ENCODE measurements at regions of chr21 and their contacts with region 1.

Region 1: GRCh38 chr21:35026617-35027562 is 22.2 kb downstream of the RUNX1 start:
- DNase-seq: peak; percentile 82 to 96 (median 88)
- ATAC-seq: peak; percentile 82
- H3K4me3 ChIP-seq: peak overlapping the region; percentile 44
- H3K4me3 Mint-ChIP-seq: peak overlapping the region; percentile 82
- H3K27ac ChIP-seq: peak overlapping the region; percentile 52 to 89
- H3K27ac Mint-ChIP-seq: peak overlapping the region; percentile 97
- H3K4me1 ChIP-seq: peaks cover 85% of the 10 kb centered on the region
- H3K4me1 Mint-ChIP-seq: peaks cover 95% of the 10 kb centered on the region
- H3K27me3 ChIP-seq: no peaks in the 10 kb centered on the region
- H3K27me3 Mint-ChIP-seq: no peaks in the 10 kb centered on the region
- CTCF ChIP-seq: no peak

Region 2: DNA sequence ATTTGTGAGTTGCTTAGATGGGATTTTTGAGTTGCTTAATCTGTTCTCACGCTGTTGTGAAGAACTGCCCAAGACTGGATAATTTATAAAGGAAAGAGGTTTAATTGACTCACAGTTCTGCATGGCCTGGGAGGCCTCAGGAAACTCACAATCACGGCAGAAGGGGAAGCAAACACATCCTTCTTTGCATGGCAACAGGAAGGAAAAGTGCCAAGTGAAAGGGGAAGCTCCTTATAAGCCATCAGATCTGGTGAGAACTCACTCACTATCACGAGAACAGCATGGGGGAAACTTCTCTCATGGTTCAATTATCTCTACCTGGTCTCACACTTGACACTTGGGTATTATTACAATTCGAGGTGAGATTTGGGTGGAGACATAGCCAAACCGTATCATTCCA is 347.8 kb before region 1 on chr21:
- CTCF ChIA-PET with region 1: no interaction called
- POLR2A ChIA-PET with region 1: no interaction called
- intact Hi-C with region 1: no loop called
- DNase-seq: peak in 2 of 14 experiments; percentile 7 to 32
- ATAC-seq: no peak
- H3K4me3 ChIP-seq: no peak overlapping the region
- H3K4me3 Mint-ChIP-seq: no peak overlapping the region
- H3K27ac ChIP-seq: no peak overlapping the region
- H3K27ac Mint-ChIP-seq: no peak overlapping the region
- H3K4me1 ChIP-seq: no peaks in the 10 kb centered on the region
- H3K4me1 Mint-ChIP-seq: no peaks in the 10 kb centered on the region
- H3K27me3 ChIP-seq: peaks cover 5 to 10% of the 10 kb centered on the region in 2 experiments
- H3K27me3 Mint-ChIP-seq: peaks cover 42% of the 10 kb centered on the region
- CTCF ChIP-seq: no peak

Region 3: GRCh38 chr21:34933609-34934335 is 93.1 kb before region 1 on chr21:
- CTCF ChIA-PET with region 1: interaction called, 6 read pairs
- POLR2A ChIA-PET with region 1: interaction called, 10 read pairs
- intact Hi-C with region 1: loop called in 1 of 2 experiments (anchors 5 kb)
- DNase-seq: peak in 7 of 14 experiments; percentile 10 to 89 (median 35)
- ATAC-seq: peak; percentile 86
- H3K4me3 ChIP-seq: peak overlapping the region; percentile 39
- H3K4me3 Mint-ChIP-seq: peak overlapping the region; percentile 86
- H3K27ac ChIP-seq: peak overlapping the region; percentile 75 to 84
- H3K27ac Mint-ChIP-seq: peak overlapping the region; percentile 99
- H3K4me1 ChIP-seq: peaks cover 47% of the 10 kb centered on the region
- H3K4me1 Mint-ChIP-seq: peaks cover 92% of the 10 kb centered on the region
- H3K27me3 ChIP-seq: no peaks in the 10 kb centered on the region
- H3K27me3 Mint-ChIP-seq: no peaks in the 10 kb centered on the region
- CTCF ChIP-seq: no peak

Region 4: GRCh38 chr21:34986561-34987500 is 40.1 kb before region 1 on chr21:
- CTCF ChIA-PET with region 1: interaction called, 10 read pairs
- POLR2A ChIA-PET with region 1: interaction called, 27 read pairs
- intact Hi-C with region 1: loop called (anchors 1 to 5 kb)
- DNase-seq: peak; percentile 37 to 87 (median 64)
- ATAC-seq: peak; percentile 68
- H3K4me3 ChIP-seq: peak overlapping the region; percentile 17
- H3K4me3 Mint-ChIP-seq: peak overlapping the region; percentile 84
- H3K27ac ChIP-seq: peak overlapping the region; percentile 54 to 74
- H3K27ac Mint-ChIP-seq: no peak overlapping the region
- H3K4me1 ChIP-seq: peaks cover 96% of the 10 kb centered on the region
- H3K4me1 Mint-ChIP-seq: peaks cover 93% of the 10 kb centered on the region
- H3K27me3 ChIP-seq: no peaks in the 10 kb centered on the region
- H3K27me3 Mint-ChIP-seq: no peaks in the 10 kb centered on the region
- CTCF ChIP-seq: no peak

Region 5: GRCh38 chr21:35011681-35012080 is 15.2 kb before region 1 on chr21:
- CTCF ChIA-PET with region 1: interaction called, 6 read pairs
- POLR2A ChIA-PET with region 1: interaction called, 13 read pairs
- intact Hi-C with region 1: loop called in 1 of 2 experiments (anchors 2 kb)
- DNase-seq: no peak
- ATAC-seq: no peak
- H3K4me3 ChIP-seq: no peak overlapping the region
- H3K4me3 Mint-ChIP-seq: peak overlapping the region; percentile 42
- H3K27ac ChIP-seq: no peak overlapping the region
- H3K27ac Mint-ChIP-seq: peak overlapping the region; percentile 79
- H3K4me1 ChIP-seq: peaks cover 51% of the 10 kb centered on the region
- H3K4me1 Mint-ChIP-seq: peaks cover 95% of the 10 kb centered on the region
- H3K27me3 ChIP-seq: no peaks in the 10 kb centered on the region
- H3K27me3 Mint-ChIP-seq: no peaks in the 10 kb centered on the region
- CTCF ChIP-seq: no peak

Region 6: DNA sequence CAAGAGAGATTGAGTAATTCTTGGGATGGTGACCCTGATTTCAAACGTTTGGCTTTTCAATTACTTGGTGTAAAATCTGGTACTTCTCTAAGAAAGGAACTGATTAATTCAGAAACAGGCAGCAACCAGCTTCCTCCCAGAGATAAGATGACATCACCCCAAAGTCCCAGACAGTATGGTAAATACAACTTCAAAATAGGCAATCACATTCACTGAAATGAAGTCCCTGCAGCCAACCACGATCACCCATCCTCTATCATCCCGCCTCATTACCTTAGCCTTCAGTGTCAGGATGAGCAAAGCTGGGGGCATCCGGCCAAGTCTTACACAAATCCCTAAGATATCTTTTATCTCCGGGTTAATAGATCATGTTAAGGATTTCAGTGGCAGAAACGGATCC is 48.7 kb after region 1 on chr21:
- CTCF ChIA-PET with region 1: no interaction called
- POLR2A ChIA-PET with region 1: no interaction called
- intact Hi-C with region 1: no loop called
- DNase-seq: no peak
- ATAC-seq: no peak
- H3K4me3 ChIP-seq: no peak overlapping the region
- H3K4me3 Mint-ChIP-seq: no peak overlapping the region
- H3K27ac ChIP-seq: no peak overlapping the region
- H3K27ac Mint-ChIP-seq: no peak overlapping the region
- H3K4me1 ChIP-seq: no peaks in the 10 kb centered on the region
- H3K4me1 Mint-ChIP-seq: no peaks in the 10 kb centered on the region
- H3K27me3 ChIP-seq: peaks cover 0 to 2% of the 10 kb centered on the region in 2 experiments
- H3K27me3 Mint-ChIP-seq: no peaks in the 10 kb centered on the region
- CTCF ChIP-seq: no peak

Region 7: GRCh38 chr21:35102488-35103371 is 75.8 kb after region 1 on chr21:
- CTCF ChIA-PET with region 1: no interaction called
- POLR2A ChIA-PET with region 1: interaction called, 3 read pairs
- intact Hi-C with region 1: loop called in 1 of 2 experiments (anchors 1 kb)
- DNase-seq: peak in 13 of 14 experiments; percentile 1 to 73 (median 32)
- ATAC-seq: peak; percentile 99
- H3K4me3 ChIP-seq: no peak overlapping the region
- H3K4me3 Mint-ChIP-seq: no peak overlapping the region
- H3K27ac ChIP-seq: peak overlapping the region in 1 of 2 donors; percentile 24
- H3K27ac Mint-ChIP-seq: no peak overlapping the region
- H3K4me1 ChIP-seq: peaks cover 15% of the 10 kb centered on the region
- H3K4me1 Mint-ChIP-seq: no peaks in the 10 kb centered on the region
- H3K27me3 ChIP-seq: no peaks in the 10 kb centered on the region
- H3K27me3 Mint-ChIP-seq: no peaks in the 10 kb centered on the region
- CTCF ChIP-seq: no peak

Measured in CD4-positive, alpha-beta T cell (primary cell).